Activated CD4-positive, alpha-beta T cell treated with anti-CD3 and anti-CD28 coated beads, Interleukin-2, amount 10 ng/mL, durations not matched to agents 24 days and 14 days (primary cell): ENCODE measurements at regions of chr5 and their contacts with region 1.

Region 1: GRCh38 chr5:119022017-119022745 is 33.8 kb upstream of the DTWD2 start:
- DNase-seq: peak; percentile 64
- H3K4me3 Mint-ChIP-seq: no peak overlapping the region
- H3K27ac Mint-ChIP-seq: peak overlapping the region; percentile 17
- H3K4me1 Mint-ChIP-seq: peaks cover 3% of the 10 kb centered on the region
- H3K27me3 Mint-ChIP-seq: peaks cover 2% of the 10 kb centered on the region

Region 2: GRCh38 chr5:119255571-119256356 is 233.6 kb after region 1 on chr5:
- intact Hi-C with region 1: loop called (anchors 1 kb)
- DNase-seq: peak; percentile 61
- H3K4me3 Mint-ChIP-seq: no peak overlapping the region
- H3K27ac Mint-ChIP-seq: peak overlapping the region; percentile 13
- H3K4me1 Mint-ChIP-seq: peaks cover 7% of the 10 kb centered on the region
- H3K27me3 Mint-ChIP-seq: no peaks in the 10 kb centered on the region

Region 3: DNA sequence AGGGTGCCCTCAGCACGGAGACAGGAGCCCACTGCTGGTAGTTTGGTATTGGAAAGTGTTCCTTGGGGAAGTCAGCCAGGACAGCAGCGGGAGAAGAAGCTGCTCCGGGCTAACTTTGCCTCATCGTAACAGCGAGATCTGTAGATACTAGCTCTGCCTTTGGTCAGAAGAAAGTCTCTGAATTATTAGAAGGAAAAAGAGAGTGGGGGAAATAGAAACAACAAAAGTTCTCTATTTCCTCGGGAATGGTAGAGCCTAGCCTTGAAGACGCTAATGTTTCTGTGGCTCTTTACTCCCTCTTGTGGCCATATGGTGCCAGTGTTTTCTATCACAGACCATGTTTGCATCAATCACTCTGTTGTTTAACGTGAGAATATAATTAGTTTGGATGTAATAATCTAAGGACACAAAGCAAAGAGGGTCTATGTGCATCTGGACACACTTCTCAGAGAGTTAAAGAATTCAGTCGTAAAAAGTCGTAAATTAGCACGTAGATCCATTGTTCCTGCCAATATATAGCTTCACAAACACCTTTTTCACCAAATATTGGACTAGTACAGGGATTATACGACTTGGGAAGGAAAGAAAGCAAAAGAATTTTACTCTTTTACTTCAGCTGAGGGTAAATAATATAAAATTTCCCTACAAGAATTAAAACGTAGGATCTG is 389.9 kb after region 1 on chr5:
- intact Hi-C with region 1: loop called (anchors 1 kb)
- DNase-seq: peak; percentile 87
- H3K4me3 Mint-ChIP-seq: peak overlapping the region; percentile 85
- H3K27ac Mint-ChIP-seq: peak overlapping the region; percentile 70
- H3K4me1 Mint-ChIP-seq: peaks cover 32% of the 10 kb centered on the region
- H3K27me3 Mint-ChIP-seq: peaks cover 10% of the 10 kb centered on the region

Region 4: GRCh38 chr5:119435436-119436132 is 413.4 kb after region 1 on chr5:
- intact Hi-C with region 1: loop called (anchors 1 kb)
- DNase-seq: peak; percentile 89
- H3K4me3 Mint-ChIP-seq: no peak overlapping the region
- H3K27ac Mint-ChIP-seq: no peak overlapping the region
- H3K4me1 Mint-ChIP-seq: peaks cover 13% of the 10 kb centered on the region
- H3K27me3 Mint-ChIP-seq: peaks cover 23% of the 10 kb centered on the region